Endothelial cell of umbilical vein (primary cell): ENCODE measurements at regions of chr10 and their contacts with region 1.

Region 1: GRCh38 chr10:71112138-71112785 is 100.1 kb upstream of the UNC5B start:
- DNase-seq: peak; percentile 31
- H3K4me3 ChIP-seq: no peak overlapping the region
- H3K27ac ChIP-seq: peak overlapping the region; percentile 50
- H3K4me1 ChIP-seq: peaks cover 15% of the 10 kb centered on the region
- H3K27me3 ChIP-seq: peaks cover 7 to 9% of the 10 kb centered on the region in 2 experiments
- CTCF ChIP-seq: no peak
- POLR2A ChIP-seq: no peak

Region 2: GRCh38 chr10:71085689-71086438 is 26.4 kb before region 1 on chr10:
- CTCF ChIA-PET with region 1: no interaction called
- POLR2A ChIA-PET with region 1: no interaction called
- dilution Hi-C with region 1: no loop called
- intact Hi-C with region 1: no loop called
- DNase-seq: no peak
- H3K4me3 ChIP-seq: no peak overlapping the region
- H3K27ac ChIP-seq: no peak overlapping the region
- H3K4me1 ChIP-seq: no peaks in the 10 kb centered on the region
- H3K27me3 ChIP-seq: peaks cover 3 to 6% of the 10 kb centered on the region in 2 experiments
- CTCF ChIP-seq: no peak
- POLR2A ChIP-seq: no peak

Region 3: DNA sequence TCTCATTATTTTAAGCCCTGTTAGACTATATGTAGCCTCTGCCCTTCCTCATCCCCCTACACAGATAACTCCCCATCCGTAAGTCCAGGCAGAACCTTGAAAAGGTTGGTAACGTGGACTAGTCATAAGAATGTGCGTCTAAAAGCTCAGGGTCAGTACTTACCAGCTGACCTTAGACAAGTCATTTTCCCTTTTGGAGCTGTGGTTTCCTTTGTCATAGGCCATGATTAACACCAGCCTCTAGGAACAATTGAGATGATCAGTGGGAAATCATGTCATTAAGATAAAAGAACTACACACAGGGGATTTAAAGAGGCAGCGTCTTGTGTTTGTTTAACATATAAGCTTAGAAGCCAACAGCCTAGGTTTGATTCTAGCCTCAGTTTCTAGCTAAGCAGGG is 93.2 kb after region 1 on chr10:
- CTCF ChIA-PET with region 1: no interaction called
- POLR2A ChIA-PET with region 1: no interaction called
- dilution Hi-C with region 1: no loop called
- intact Hi-C with region 1: loop called (anchors 1 kb)
- DNase-seq: peak; percentile 73
- H3K4me3 ChIP-seq: no peak overlapping the region
- H3K27ac ChIP-seq: no peak overlapping the region
- H3K4me1 ChIP-seq: peaks cover 17% of the 10 kb centered on the region
- H3K27me3 ChIP-seq: peaks cover 13 to 18% of the 10 kb centered on the region in 2 experiments
- CTCF ChIP-seq: no peak
- POLR2A ChIP-seq: no peak